ENCODE measurements at regions of chr3 and their contacts with region 1.

Region 1: DNA sequence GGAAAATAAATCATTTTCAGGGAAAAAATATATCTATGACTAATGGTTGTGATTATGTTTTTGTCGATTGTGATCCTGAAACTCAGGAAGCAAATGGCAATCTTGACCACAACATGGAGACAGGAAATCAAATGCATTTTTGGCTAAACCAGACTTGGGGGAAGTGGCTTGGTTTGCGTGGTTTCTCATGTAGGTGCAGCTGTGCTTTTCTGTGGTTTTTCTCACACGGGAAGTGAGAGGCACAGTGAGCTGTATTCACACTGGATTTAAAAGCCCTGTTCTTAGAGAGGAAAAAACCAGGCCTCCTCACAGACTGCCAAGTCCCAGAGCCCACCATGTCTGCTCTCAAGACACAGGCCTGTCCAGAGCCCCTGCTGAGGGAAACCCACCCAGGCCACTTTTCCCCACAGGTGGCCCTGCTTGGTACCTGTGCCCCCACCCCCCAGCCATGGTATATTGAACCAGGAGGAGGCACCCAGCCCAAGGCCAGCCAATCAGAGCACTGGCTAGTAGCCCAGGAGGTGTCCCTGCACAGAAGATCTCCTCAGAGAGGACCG is 46.1 kb downstream of the BTD start:
- DNase-seq: peak; percentile 82
- H3K4me3 Mint-ChIP-seq: peak overlapping the region; percentile 17
- H3K27ac Mint-ChIP-seq: peak overlapping the region; percentile 69
- H3K4me1 Mint-ChIP-seq: peaks cover 37% of the 10 kb centered on the region
- H3K27me3 Mint-ChIP-seq: peaks cover 3% of the 10 kb centered on the region

Region 2: GRCh38 chr3:15601397-15602145 is 46.1 kb before region 1 on chr3 and contains the starts of genes BTD and HACL1:
- CTCF ChIA-PET with region 1: no interaction called
- POLR2A ChIA-PET with region 1: no interaction called
- intact Hi-C with region 1: loop called (anchors 1 kb)
- DNase-seq: peak; percentile 98
- H3K4me3 Mint-ChIP-seq: peak within 1 kb of the TSS; percentile 99
- H3K27ac Mint-ChIP-seq: peak within 1 kb of the TSS; percentile 94
- H3K4me1 Mint-ChIP-seq: peaks cover 43% of the 10 kb centered on the region
- H3K27me3 Mint-ChIP-seq: no peaks in the 10 kb centered on the region
- total RNA-seq, gene BTD: 8.6 to 8.7 TPM
- total RNA-seq, gene HACL1: 29.9 to 30.0 TPM

Region 3: GRCh38 chr3:15636003-15636709 is 11.5 kb before region 1 on chr3:
- CTCF ChIA-PET with region 1: interaction called, 4 read pairs
- POLR2A ChIA-PET with region 1: interaction called, 5 read pairs
- intact Hi-C with region 1: loop called (anchors 1 kb)
- DNase-seq: peak; percentile 65
- H3K4me3 Mint-ChIP-seq: peak overlapping the region; percentile 44
- H3K27ac Mint-ChIP-seq: peak overlapping the region; percentile 89
- H3K4me1 Mint-ChIP-seq: peaks cover 52% of the 10 kb centered on the region
- H3K27me3 Mint-ChIP-seq: no peaks in the 10 kb centered on the region

Region 4: GRCh38 chr3:15667484-15667883 is 19.8 kb after region 1 on chr3:
- CTCF ChIA-PET with region 1: no interaction called
- POLR2A ChIA-PET with region 1: no interaction called
- intact Hi-C with region 1: loop called (anchors 2 kb)
- DNase-seq: peak; percentile 56
- H3K4me3 Mint-ChIP-seq: no peak overlapping the region
- H3K27ac Mint-ChIP-seq: no peak overlapping the region
- H3K4me1 Mint-ChIP-seq: peaks cover 20% of the 10 kb centered on the region
- H3K27me3 Mint-ChIP-seq: no peaks in the 10 kb centered on the region

Region 5: GRCh38 chr3:15743587-15744009 is 95.9 kb after region 1 on chr3:
- CTCF ChIA-PET with region 1: no interaction called
- POLR2A ChIA-PET with region 1: no interaction called
- intact Hi-C with region 1: loop called (anchors 1 kb)
- DNase-seq: no peak
- H3K4me3 Mint-ChIP-seq: no peak overlapping the region
- H3K27ac Mint-ChIP-seq: no peak overlapping the region
- H3K4me1 Mint-ChIP-seq: peaks cover 40% of the 10 kb centered on the region
- H3K27me3 Mint-ChIP-seq: no peaks in the 10 kb centered on the region

Measured in activated CD4-positive, alpha-beta memory T cell treated with anti-CD3 and anti-CD28 coated beads for 36 hours (primary cell).